ENCODE measurements at regions of chr20 and their contacts with region 1.

Region 1: DNA sequence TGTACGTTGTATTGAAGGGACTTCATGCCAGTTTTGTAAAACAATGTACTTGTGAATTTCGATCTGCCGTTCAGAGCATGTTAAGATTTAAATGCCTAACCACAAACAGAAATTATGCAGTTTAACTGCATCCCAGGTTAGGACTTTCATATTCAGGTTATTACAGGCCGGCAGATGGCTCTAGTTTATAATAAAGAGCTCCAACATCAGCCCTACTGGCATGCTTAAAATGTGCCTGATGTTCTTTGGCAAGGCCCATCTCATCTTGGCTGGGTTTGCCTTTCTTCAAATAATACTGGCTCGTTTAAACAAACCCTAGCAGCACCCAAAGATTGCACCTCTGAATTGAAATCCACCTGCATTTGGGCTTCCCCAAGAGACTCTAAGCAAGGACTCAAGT is 169.3 kb upstream of the RIN2 start:
- DNase-seq: no peak
- ATAC-seq: no peak
- H3K4me3 ChIP-seq: no peak overlapping the region
- H3K27ac ChIP-seq: no peak overlapping the region
- H3K4me1 ChIP-seq: no peaks in the 10 kb centered on the region
- H3K27me3 ChIP-seq: no peaks in the 10 kb centered on the region; the same call in 1 of the 2 replicates
- CTCF ChIP-seq: no peak
- POLR2A ChIP-seq: no peak
- RAD21 ChIP-seq: no peak

Region 2: GRCh38 chr20:18515973-18516372 is 1072.8 kb before region 1 on chr20:
- CTCF ChIA-PET with region 1: no interaction called
- POLR2A ChIA-PET with region 1: interaction called, 17 read pairs
- dilution Hi-C with region 1: no loop called
- in situ Hi-C with region 1: no loop called
- intact Hi-C with region 1: no loop called
- DNase-seq: no peak
- ATAC-seq: no peak
- H3K4me3 ChIP-seq: no peak overlapping the region
- H3K27ac ChIP-seq: no peak overlapping the region
- H3K4me1 ChIP-seq: no peaks in the 10 kb centered on the region
- H3K27me3 ChIP-seq: no peaks in the 10 kb centered on the region
- CTCF ChIP-seq: no peak
- POLR2A ChIP-seq: no peak
- RAD21 ChIP-seq: no peak

Region 3: GRCh38 chr20:19427514-19428312 is 161.0 kb before region 1 on chr20:
- CTCF ChIA-PET with region 1: no interaction called
- POLR2A ChIA-PET with region 1: no interaction called
- dilution Hi-C with region 1: no loop called
- in situ Hi-C with region 1: no loop called
- intact Hi-C with region 1: no loop called
- DNase-seq: no peak
- ATAC-seq: no peak
- H3K4me3 ChIP-seq: no peak overlapping the region
- H3K27ac ChIP-seq: no peak overlapping the region
- H3K4me1 ChIP-seq: no peaks in the 10 kb centered on the region
- H3K27me3 ChIP-seq: no peaks in the 10 kb centered on the region
- CTCF ChIP-seq: no peak
- POLR2A ChIP-seq: no peak
- RAD21 ChIP-seq: no peak